Activated B cell treated with CpG ODN at 0.5 μM for 24 hours (primary cell): ENCODE measurements at regions of chr21 and their contacts with region 1.

Region 1: DNA sequence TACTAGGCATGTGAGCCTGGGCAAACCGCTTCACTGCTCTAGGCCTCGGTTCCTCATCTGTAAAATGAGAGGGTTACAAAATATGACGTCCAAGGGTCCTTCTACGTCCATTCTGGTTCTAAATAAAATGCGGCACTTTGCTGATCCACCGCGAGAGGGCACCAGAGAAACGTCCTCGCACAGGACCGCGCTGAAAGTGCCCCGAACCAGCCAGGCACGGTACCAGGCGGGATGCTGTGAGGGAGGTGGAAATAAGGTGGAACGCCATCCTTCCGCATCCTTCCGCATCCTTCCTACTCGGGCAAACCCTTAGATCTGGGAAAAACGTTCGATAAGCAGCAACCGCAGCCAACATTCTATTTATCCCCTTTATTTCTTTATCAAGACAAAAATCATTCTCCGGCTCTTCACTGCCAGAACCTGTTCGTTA is 60.3 kb upstream of the KRTAP19-8 start:
- DNase-seq: peak; percentile 46
- ATAC-seq: peak; percentile 67
- H3K4me3 Mint-ChIP-seq: no peak overlapping the region
- H3K27ac Mint-ChIP-seq: no peak overlapping the region
- H3K4me1 Mint-ChIP-seq: peaks cover 12% of the 10 kb centered on the region
- H3K27me3 Mint-ChIP-seq: peaks cover 10% of the 10 kb centered on the region
- CTCF ChIP-seq: no peak

Region 2: GRCh38 chr21:31043471-31043870 is 55.1 kb before region 1 on chr21:
- CTCF ChIA-PET with region 1: no interaction called
- POLR2A ChIA-PET with region 1: no interaction called
- intact Hi-C with region 1: no loop called
- DNase-seq: no peak
- ATAC-seq: no peak
- H3K4me3 Mint-ChIP-seq: no peak overlapping the region
- H3K27ac Mint-ChIP-seq: no peak overlapping the region
- H3K4me1 Mint-ChIP-seq: no peaks in the 10 kb centered on the region
- H3K27me3 Mint-ChIP-seq: peaks cover 7% of the 10 kb centered on the region
- CTCF ChIP-seq: no peak

Region 3: DNA sequence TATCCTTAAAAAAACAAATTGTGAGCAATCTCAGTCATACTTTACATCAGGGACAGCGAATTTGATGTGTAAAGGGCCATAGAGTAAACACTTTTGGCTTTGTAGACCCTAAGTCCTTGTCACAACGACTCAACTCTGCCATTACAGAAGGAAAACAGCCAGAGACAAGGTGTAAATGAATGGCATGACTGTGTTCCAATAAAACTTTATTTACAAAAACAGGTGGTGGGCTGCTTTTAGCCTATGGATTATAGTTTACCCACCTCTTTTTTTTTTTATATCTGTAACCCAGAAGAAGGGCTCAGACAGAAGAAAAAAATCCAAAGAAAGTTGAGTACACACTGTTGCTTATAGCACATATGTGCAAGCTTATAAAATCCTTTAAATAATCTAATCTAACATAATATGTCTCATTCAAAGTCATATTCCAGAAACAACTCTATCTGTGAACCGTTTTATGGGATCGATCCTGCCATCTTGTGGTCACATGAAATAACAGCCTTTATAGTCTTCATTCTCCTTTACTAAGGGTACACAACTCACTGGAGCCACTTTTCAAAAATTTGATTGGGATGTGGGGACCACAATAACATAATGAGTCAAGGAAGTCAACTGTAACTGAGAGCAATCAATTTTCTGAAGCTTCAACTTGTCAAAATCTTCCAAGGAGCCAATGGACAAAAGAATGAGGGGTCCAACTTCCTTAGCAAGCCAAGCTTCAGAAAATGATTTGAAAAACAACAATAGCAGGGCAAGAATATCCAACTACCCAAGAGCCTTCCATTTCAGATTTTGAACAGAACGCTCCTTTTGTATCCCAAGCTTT is 81.9 kb after region 1 on chr21:
- CTCF ChIA-PET with region 1: interaction called, 8 read pairs
- POLR2A ChIA-PET with region 1: no interaction called
- intact Hi-C with region 1: loop called (anchors 1 kb)
- DNase-seq: no peak
- ATAC-seq: no peak
- H3K4me3 Mint-ChIP-seq: no peak overlapping the region
- H3K27ac Mint-ChIP-seq: no peak overlapping the region
- H3K4me1 Mint-ChIP-seq: peaks cover 7% of the 10 kb centered on the region
- H3K27me3 Mint-ChIP-seq: no peaks in the 10 kb centered on the region
- CTCF ChIP-seq: no peak

Region 4: DNA sequence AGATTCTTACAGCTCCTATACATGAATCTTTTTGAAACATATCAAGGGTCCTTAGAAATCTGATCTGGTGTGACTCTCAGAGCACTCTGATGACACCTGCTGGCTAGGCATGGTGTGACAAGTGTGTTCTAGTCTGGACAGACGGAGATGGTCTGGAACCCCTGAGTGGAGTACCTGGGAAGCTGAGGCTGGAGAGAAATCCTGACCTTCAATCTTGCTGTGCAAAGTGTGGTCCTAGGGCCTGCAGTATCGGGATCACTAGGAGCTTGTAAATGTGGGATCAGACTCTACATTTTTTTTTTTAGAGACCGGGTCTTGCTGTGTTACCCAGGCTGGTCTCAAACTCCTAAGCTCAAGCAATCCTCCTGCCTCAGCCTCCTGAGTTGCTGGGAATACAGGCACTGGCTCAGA is 482.3 kb after region 1 on chr21:
- CTCF ChIA-PET with region 1: interaction called, 19 read pairs
- POLR2A ChIA-PET with region 1: no interaction called
- intact Hi-C with region 1: loop called (anchors 1 kb)
- DNase-seq: peak; percentile 42
- ATAC-seq: peak; percentile 85
- H3K4me3 Mint-ChIP-seq: no peak overlapping the region
- H3K27ac Mint-ChIP-seq: no peak overlapping the region
- H3K4me1 Mint-ChIP-seq: no peaks in the 10 kb centered on the region
- H3K27me3 Mint-ChIP-seq: peaks cover 8% of the 10 kb centered on the region
- CTCF ChIP-seq: no peak